ENCODE measurements at regions of chr1 and their contacts with region 1.

Region 1: DNA sequence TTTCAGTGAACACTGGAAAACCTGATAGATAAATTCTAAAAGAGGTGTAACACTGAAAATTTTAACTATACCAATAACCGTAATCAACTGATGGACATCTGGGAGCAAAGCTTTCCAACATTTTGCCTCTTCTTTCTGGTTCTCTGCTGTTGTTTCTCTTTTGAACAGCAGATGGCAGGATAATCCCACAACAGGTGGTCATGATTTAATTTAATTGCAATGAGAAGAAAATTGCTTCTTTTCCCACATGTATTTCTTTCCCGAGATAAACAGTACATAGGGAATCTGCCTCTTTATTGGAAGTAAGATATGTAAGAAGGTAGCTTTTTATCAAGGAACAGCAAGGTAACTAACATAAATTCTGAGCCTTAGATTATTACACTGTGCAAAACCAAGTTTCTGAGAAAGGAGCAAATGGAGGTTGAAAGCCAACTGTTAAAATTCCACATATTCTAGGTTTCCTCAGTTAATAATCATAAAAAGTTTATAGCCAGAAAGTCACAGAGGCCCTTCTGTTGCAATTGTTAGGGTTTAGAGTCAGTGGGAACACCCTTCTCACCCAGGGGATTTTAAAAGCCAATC is 72.9 kb downstream of the RPS6KA1 start:
- DNase-seq: peak; percentile 78
- ATAC-seq: peak; percentile 62
- H3K4me3 ChIP-seq: no peak overlapping the region
- H3K4me3 Mint-ChIP-seq: no peak overlapping the region
- H3K27ac ChIP-seq: no peak overlapping the region
- H3K27ac Mint-ChIP-seq: no peak overlapping the region
- H3K4me1 ChIP-seq: peaks cover 0 to 5% of the 10 kb centered on the region in 2 donors
- H3K4me1 Mint-ChIP-seq: peaks cover 6% of the 10 kb centered on the region
- H3K27me3 ChIP-seq: no peaks in the 10 kb centered on the region
- H3K27me3 Mint-ChIP-seq: no peaks in the 10 kb centered on the region
- CTCF ChIP-seq: peak; percentile 92

Region 2: DNA sequence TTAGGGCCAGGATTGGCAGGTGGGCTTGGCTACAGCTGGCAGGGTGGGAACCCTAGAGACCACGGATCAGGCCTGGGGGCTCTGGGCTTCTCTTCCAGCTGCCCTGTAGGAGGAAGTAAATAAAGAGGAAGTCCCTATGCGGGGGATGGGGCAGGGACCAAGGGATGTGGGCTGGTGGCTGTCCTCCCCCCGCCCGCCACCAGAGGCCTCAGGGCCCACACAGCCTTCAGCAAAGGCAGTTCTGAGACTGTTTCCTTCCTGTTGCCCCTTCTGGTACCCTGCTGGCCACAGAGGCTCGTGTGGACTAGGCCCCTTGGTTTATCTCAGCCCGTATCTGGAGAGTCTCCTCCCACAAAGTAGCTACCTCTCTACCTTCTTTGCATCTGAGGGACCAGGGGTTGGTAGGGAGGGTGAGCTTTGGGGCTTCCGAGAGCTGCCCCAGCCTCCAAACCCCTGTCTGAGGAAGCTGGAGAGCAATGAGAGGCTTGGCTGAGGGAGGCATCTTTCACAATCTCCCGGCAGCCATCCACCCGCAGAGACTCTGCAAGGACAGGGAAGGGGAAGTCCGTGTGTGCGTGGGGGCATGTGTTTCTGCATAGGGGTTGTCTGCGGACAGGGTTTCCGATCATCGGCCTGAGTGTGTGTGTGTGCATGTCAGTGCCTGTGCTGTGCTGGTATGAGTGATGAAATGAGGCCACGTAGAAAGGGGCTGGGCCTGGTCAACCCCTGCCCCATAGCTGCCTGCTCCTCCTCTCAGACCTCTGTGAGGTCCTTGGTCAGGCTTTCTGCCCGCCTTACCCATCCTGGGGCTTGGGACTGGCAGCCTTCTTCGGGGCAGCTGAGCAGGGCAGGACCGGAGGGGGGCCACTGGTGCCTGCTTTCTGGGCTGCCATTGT is 60.4 kb before region 1 on chr1:
- CTCF ChIA-PET with region 1: interaction called, 46 read pairs
- POLR2A ChIA-PET with region 1: no interaction called
- intact Hi-C with region 1: loop called (anchors 1 kb)
- DNase-seq: peak; percentile 93
- ATAC-seq: peak; percentile 62
- H3K4me3 ChIP-seq: peak overlapping the region; percentile 38 to 70 (median 51)
- H3K4me3 Mint-ChIP-seq: peak overlapping the region; percentile 90
- H3K27ac ChIP-seq: peak overlapping the region; percentile 87 to 92
- H3K27ac Mint-ChIP-seq: peak overlapping the region; percentile 99
- H3K4me1 ChIP-seq: peaks cover 87 to 95% of the 10 kb centered on the region in 2 donors
- H3K4me1 Mint-ChIP-seq: peaks cover 86% of the 10 kb centered on the region
- H3K27me3 ChIP-seq: no peaks in the 10 kb centered on the region
- H3K27me3 Mint-ChIP-seq: no peaks in the 10 kb centered on the region
- CTCF ChIP-seq: peak; percentile 78

Region 3: DNA sequence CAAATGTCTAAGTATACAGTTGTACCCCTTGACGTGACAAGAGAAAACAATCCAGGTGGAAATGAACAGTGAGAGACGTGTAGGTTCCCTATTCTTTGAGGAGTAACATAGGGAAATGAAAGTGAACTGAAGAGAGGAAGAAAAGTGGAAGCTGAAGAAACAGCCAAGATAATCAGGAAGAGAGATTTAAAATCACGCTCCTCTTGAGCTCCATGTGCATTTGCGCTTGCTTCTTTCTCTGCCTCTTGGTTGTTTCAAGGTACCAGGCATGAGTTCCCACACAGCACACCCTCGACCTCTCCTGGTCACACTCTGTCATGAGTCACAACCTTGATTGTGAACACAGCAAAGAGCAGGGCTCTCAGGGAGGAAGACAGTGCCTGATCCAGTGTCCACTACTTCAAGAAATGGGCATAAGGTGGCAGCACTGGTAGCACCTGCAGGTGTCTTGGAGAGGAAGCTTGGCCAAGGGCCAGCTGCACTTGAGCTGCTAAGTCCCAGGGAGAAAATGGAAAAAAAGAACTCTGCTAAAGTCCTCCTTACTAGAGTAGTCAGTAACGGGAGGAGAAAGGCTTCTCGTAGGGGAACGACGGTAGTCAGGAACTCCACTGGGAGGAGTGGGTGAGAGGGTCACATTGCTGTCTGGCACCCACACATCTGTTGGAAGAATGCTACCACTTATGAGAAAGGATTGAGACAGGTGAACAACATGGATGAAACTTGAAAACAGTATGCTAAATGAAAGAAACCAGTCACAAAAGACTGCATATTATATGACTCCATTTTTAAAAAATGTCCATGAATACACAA is 75.0 kb after region 1 on chr1:
- CTCF ChIA-PET with region 1: interaction called, 58 read pairs
- POLR2A ChIA-PET with region 1: interaction called, 3 read pairs
- intact Hi-C with region 1: loop called (anchors 1 kb)
- DNase-seq: peak; percentile 76
- ATAC-seq: peak; percentile 96
- H3K4me3 ChIP-seq: peak overlapping the region in 4 of 5 experiments; percentile 13 to 31 (median 24)
- H3K4me3 Mint-ChIP-seq: peak overlapping the region; percentile 77
- H3K27ac ChIP-seq: peak overlapping the region in 1 of 2 donors; percentile 12
- H3K27ac Mint-ChIP-seq: peak overlapping the region; percentile 83
- H3K4me1 ChIP-seq: peaks cover 14 to 15% of the 10 kb centered on the region in 2 donors
- H3K4me1 Mint-ChIP-seq: peaks cover 15% of the 10 kb centered on the region
- H3K27me3 ChIP-seq: no peaks in the 10 kb centered on the region
- H3K27me3 Mint-ChIP-seq: no peaks in the 10 kb centered on the region
- CTCF ChIP-seq: peak; percentile 45

Region 4: DNA sequence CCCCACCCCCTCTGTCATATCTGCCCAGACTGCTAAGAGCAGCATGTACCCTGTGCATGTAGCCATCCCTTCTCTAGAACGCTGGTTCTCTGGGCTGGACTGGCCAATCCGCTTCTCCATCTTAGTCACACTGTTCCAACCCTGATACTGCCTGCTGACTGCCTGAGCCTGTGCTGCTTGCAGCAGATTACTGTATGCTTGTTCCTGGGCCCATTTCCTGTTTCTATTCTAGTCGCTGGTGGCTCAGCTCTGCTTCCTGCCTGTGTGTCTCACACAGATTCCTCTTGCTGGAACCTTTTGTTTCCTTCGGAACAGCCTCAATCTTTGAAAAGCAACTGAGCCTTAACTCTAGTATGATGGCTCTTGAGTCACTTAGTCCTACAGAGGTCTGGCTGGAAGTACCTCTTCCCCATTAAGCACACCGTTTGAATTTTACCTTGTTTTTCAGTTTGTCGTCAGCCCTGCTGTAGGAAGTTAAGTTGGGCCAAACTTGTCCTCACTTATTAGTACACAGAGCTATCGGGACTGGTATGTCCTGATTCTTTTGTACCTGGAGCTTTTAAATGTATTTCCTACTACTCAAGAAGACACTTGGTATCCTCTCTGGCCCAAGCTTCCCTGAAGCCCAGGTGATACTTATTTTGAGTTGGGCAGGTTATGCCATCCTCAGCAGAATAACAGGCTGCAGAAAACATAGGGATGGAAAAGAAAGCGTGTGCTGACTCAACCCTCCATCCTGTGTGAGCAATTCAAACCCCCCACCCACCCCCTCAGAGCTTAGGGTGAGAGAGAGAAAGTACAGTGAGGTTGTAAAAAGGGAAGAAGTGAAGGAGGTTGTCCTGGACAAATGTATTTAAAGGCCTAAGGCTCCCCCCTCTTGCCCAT is 141.8 kb after region 1 on chr1:
- CTCF ChIA-PET with region 1: interaction called, 8 read pairs
- POLR2A ChIA-PET with region 1: interaction called, 4 read pairs
- intact Hi-C with region 1: loop called (anchors 1 kb)
- DNase-seq: peak; percentile 88
- ATAC-seq: peak; percentile 95
- H3K4me3 ChIP-seq: peak overlapping the region; percentile 7 to 51 (median 39)
- H3K4me3 Mint-ChIP-seq: peak overlapping the region; percentile 80
- H3K27ac ChIP-seq: peak overlapping the region; percentile 75 to 96
- H3K27ac Mint-ChIP-seq: peak overlapping the region; percentile 92
- H3K4me1 ChIP-seq: peaks cover 82 to 88% of the 10 kb centered on the region in 2 donors
- H3K4me1 Mint-ChIP-seq: peaks cover 83% of the 10 kb centered on the region
- H3K27me3 ChIP-seq: no peaks in the 10 kb centered on the region
- H3K27me3 Mint-ChIP-seq: no peaks in the 10 kb centered on the region
- CTCF ChIP-seq: no peak

Region 5: DNA sequence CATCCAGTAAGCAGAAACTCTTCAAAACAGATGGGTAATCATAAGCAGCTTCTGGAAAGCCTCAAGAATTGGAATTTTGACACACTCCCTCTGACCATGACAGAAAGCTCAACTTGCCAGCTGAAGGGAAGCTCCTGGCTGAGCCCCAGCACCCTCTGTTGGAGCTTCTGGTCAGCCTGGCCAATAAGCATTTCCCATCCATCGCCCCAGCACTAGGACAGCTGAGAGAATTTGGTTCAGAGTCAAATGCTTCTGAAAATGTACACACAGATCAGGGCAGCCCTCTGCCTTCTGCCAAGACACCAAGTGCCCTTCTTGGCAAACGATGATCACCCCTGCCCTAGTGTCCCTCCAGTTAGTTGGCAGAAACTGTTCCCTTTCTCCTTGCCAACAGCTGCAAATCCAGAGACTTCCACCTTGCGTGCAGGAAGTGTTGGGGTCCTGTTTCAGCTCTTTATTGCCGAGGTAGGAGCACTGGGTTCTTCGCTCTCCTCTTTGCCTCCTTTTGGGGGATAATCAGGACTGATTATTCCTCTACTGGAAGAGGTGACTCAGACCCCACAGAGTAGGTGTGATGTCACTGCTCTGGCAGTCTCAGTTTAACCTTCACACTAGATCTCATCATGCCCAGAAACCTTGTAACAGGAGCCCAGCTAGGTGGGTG is 197.1 kb after region 1 on chr1:
- CTCF ChIA-PET with region 1: interaction called, 13 read pairs
- POLR2A ChIA-PET with region 1: no interaction called
- intact Hi-C with region 1: no loop called
- DNase-seq: no peak
- ATAC-seq: no peak
- H3K4me3 ChIP-seq: no peak overlapping the region
- H3K4me3 Mint-ChIP-seq: no peak overlapping the region
- H3K27ac ChIP-seq: no peak overlapping the region
- H3K27ac Mint-ChIP-seq: no peak overlapping the region
- H3K4me1 ChIP-seq: no peaks in the 10 kb centered on the region
- H3K4me1 Mint-ChIP-seq: peaks cover 7% of the 10 kb centered on the region
- H3K27me3 ChIP-seq: no peaks in the 10 kb centered on the region
- H3K27me3 Mint-ChIP-seq: no peaks in the 10 kb centered on the region
- CTCF ChIP-seq: no peak

Region 6: GRCh38 chr1:26877326-26877725 is 274.9 kb after region 1 on chr1:
- CTCF ChIA-PET with region 1: interaction called, 11 read pairs
- POLR2A ChIA-PET with region 1: no interaction called
- intact Hi-C with region 1: loop called (anchors 1 kb)
- DNase-seq: no peak
- ATAC-seq: no peak
- H3K4me3 ChIP-seq: no peak overlapping the region
- H3K4me3 Mint-ChIP-seq: no peak overlapping the region
- H3K27ac ChIP-seq: no peak overlapping the region
- H3K27ac Mint-ChIP-seq: no peak overlapping the region
- H3K4me1 ChIP-seq: peaks cover 0 to 3% of the 10 kb centered on the region in 2 donors
- H3K4me1 Mint-ChIP-seq: peaks cover 3% of the 10 kb centered on the region
- H3K27me3 ChIP-seq: no peaks in the 10 kb centered on the region
- H3K27me3 Mint-ChIP-seq: no peaks in the 10 kb centered on the region
- CTCF ChIP-seq: no peak

Region 7: GRCh38 chr1:26959722-26960615 is 357.5 kb after region 1 on chr1 and contains the start of gene KDF1:
- CTCF ChIA-PET with region 1: no interaction called
- POLR2A ChIA-PET with region 1: no interaction called
- intact Hi-C with region 1: no loop called
- DNase-seq: peak; percentile 82
- ATAC-seq: peak; percentile 89
- H3K4me3 ChIP-seq: peak within 1 kb of the TSS in 4 of 5 experiments; percentile 44 to 80 (median 65)
- H3K4me3 Mint-ChIP-seq: peak within 1 kb of the TSS; percentile 86
- H3K27ac ChIP-seq: peak within 1 kb of the TSS in 1 of 2 donors; percentile 26
- H3K27ac Mint-ChIP-seq: peak within 1 kb of the TSS; percentile 47
- H3K4me1 ChIP-seq: peaks cover 14 to 17% of the 10 kb centered on the region in 2 donors
- H3K4me1 Mint-ChIP-seq: peaks cover 15% of the 10 kb centered on the region
- H3K27me3 ChIP-seq: peaks cover 0 to 27% (median 8%) of the 10 kb centered on the region in 4 experiments
- H3K27me3 Mint-ChIP-seq: peaks cover 20% of the 10 kb centered on the region
- CTCF ChIP-seq: peak; percentile 39
- total RNA-seq, gene KDF1: 0.74 and 1.4 TPM in 2 replicates

Measured in B cell (primary cell).